Activated T-helper 1 cell treated with anti-CD3 and anti-CD28 coated beads, Interleukin-12 subunit alpha, Interleukin-12 subunit beta, Interleukin-2, Interleukin-4 antibody, amounts not matched to agents 30 ng/mL and 10 ng/mL and 1 ng/mL, durations not matched to agents 14 hours and 24 hours and 36 hours (primary cell): ENCODE measurements at regions of chr20 and their contacts with region 1.

Region 1: GRCh38 chr20:35463455-35464300 is 8.3 kb downstream of the CEP250 start:
- DNase-seq: peak; percentile 48
- H3K4me3 Mint-ChIP-seq: no peak overlapping the region
- H3K27ac Mint-ChIP-seq: no peak overlapping the region
- H3K4me1 Mint-ChIP-seq: no peaks in the 10 kb centered on the region
- H3K27me3 Mint-ChIP-seq: no peaks in the 10 kb centered on the region

Region 2: GRCh38 chr20:35523298-35523888 is 59.7 kb after region 1 on chr20:
- intact Hi-C with region 1: loop called (anchors 5 kb)
- DNase-seq: peak; percentile 14
- H3K4me3 Mint-ChIP-seq: no peak overlapping the region
- H3K27ac Mint-ChIP-seq: no peak overlapping the region
- H3K4me1 Mint-ChIP-seq: no peaks in the 10 kb centered on the region
- H3K27me3 Mint-ChIP-seq: peaks cover 3% of the 10 kb centered on the region

Region 3: GRCh38 chr20:36132802-36133211 is 669.1 kb after region 1 on chr20:
- intact Hi-C with region 1: loop called (anchors 1 kb)
- DNase-seq: no peak
- H3K4me3 Mint-ChIP-seq: no peak overlapping the region
- H3K27ac Mint-ChIP-seq: no peak overlapping the region
- H3K4me1 Mint-ChIP-seq: no peaks in the 10 kb centered on the region
- H3K27me3 Mint-ChIP-seq: peaks cover 2% of the 10 kb centered on the region